Caco-2 (cell line): ENCODE measurements at regions of chr1 and their contacts with region 1.

Region 1: GRCh38 chr1:113859478-113860175 is 11.9 kb downstream of the PTPN22 start:
- DNase-seq: no peak
- H3K4me3 ChIP-seq: no peak overlapping the region
- H3K4me3 Mint-ChIP-seq: no peak overlapping the region
- H3K27ac Mint-ChIP-seq: no peak overlapping the region
- H3K4me1 ChIP-seq: no peaks in the 10 kb centered on the region
- H3K4me1 Mint-ChIP-seq: no peaks in the 10 kb centered on the region
- H3K27me3 ChIP-seq: no peaks in the 10 kb centered on the region
- H3K27me3 Mint-ChIP-seq: no peaks in the 10 kb centered on the region
- CTCF ChIP-seq: no peak

Region 2: DNA sequence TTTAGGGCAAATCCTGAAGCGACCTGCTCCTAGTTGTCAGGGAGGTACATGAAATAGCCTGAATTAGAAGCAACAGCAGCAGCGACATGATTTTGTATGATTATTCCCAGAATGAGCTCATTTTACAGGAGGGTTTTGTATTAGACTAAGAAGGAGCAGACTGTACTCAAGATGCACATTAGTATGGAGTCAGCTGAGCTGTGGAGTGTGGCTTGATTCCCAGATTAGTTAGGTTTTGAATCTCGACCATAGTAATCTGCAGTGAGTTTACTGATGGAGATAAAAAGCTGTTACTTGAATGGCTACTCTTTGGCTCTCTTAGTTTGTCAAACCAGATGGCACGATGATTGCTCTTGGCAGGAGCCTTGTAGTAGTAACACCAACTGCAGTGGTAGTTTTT is 243.5 kb before region 1 on chr1:
- CTCF ChIA-PET with region 1: no interaction called
- POLR2A ChIA-PET with region 1: no interaction called
- intact Hi-C with region 1: no loop called
- DNase-seq: no peak
- H3K4me3 ChIP-seq: no peak overlapping the region
- H3K4me3 Mint-ChIP-seq: no peak overlapping the region
- H3K27ac Mint-ChIP-seq: no peak overlapping the region
- H3K4me1 ChIP-seq: no peaks in the 10 kb centered on the region
- H3K4me1 Mint-ChIP-seq: no peaks in the 10 kb centered on the region
- H3K27me3 ChIP-seq: no peaks in the 10 kb centered on the region
- H3K27me3 Mint-ChIP-seq: no peaks in the 10 kb centered on the region
- CTCF ChIP-seq: no peak

Region 3: DNA sequence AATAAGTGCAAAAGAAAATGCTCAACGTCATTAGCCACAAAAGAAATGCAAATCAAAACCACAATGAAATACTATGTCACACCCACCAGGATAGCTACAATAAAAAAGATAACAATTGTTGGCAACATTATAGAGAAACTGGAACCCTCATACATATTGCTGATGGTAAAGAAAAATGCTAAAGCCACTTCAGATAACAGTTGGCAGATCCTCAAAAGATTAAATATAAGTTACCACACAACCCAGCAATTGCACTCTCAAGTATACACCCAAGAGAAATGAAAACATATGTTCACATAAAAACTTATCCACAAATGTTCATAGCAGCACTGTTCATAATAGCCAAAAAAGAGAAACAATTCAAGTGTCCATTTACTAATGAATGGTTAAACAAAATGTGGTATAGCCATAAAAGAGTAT is 630.7 kb after region 1 on chr1:
- CTCF ChIA-PET with region 1: no interaction called
- POLR2A ChIA-PET with region 1: no interaction called
- intact Hi-C with region 1: loop called (anchors 5 kb)
- DNase-seq: no peak
- H3K4me3 ChIP-seq: no peak overlapping the region
- H3K4me3 Mint-ChIP-seq: no peak overlapping the region
- H3K27ac Mint-ChIP-seq: no peak overlapping the region
- H3K4me1 ChIP-seq: 0 out of 2 replicates have a peak, but pooled peaks cover 6% of the 10 kb centered on the region
- H3K4me1 Mint-ChIP-seq: peaks cover 13% of the 10 kb centered on the region
- H3K27me3 ChIP-seq: no peaks in the 10 kb centered on the region
- H3K27me3 Mint-ChIP-seq: no peaks in the 10 kb centered on the region
- CTCF ChIP-seq: no peak